Aorta (tissue), 5 donors: ENCODE measurements at regions of chr1 and their contacts with region 1.

Region 1: GRCh38 chr1:218665221-218665620 is 320.1 kb downstream of the TGFB2 start:
- DNase-seq: peak; percentile 75 to 86
- ATAC-seq: peak; percentile 89
- H3K4me3 ChIP-seq: no peak overlapping the region
- H3K27ac ChIP-seq: peak overlapping the region in 1 of 2 donors; percentile 28
- H3K4me1 ChIP-seq: no peaks in the 10 kb centered on the region
- H3K27me3 ChIP-seq: no peaks in the 10 kb centered on the region

Region 2: GRCh38 chr1:218620956-218621355 is 44.3 kb before region 1 on chr1:
- intact Hi-C with region 1: loop called in 1 of 2 experiments (anchors 5 kb)
- DNase-seq: no peak
- ATAC-seq: no peak
- H3K4me3 ChIP-seq: no peak overlapping the region
- H3K27ac ChIP-seq: peak overlapping the region in 1 of 2 donors; percentile 3
- H3K4me1 ChIP-seq: no peaks in the 10 kb centered on the region
- H3K27me3 ChIP-seq: no peaks in the 10 kb centered on the region